Left colon (tissue), 2 donors: ENCODE measurements at regions of chr12 and their contacts with region 1.

Region 1: DNA sequence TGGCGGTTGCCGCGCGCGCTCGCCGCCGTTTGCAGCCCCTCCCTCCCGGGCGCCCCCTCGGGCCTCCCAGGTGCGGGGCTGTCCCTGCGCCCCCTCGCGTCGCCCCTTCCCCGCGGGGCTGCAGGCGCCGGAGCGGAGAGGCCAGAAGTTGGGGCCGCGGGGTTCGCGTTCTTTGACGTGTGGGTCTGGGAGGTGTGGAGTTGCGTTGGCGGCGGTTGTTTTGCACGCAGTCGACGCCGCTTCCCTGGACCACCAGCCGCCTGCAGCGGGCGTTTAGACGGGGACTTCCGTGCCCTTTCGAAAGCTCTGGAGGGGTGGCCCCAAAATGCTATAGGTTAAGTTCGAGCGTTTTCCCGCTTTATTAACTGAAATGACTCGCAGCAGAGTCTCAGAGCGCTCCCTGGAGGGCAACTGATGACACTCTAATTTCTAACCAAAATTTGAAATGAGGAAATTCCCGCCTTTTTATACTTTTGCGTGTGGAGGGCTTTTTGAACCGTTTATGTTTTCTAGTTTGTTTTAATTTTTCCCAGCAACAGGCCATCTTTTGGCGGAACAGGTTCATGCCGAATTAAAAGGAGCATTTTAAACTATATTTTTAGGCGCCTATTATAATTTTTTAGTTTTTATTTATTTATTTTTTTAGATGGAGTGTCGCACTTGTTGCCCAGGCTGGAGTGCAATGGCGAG is 939 bp downstream of the TMPO start:
- DNase-seq: peak; percentile 77 to 78
- ATAC-seq: peak; percentile 50

Region 2: GRCh38 chr12:98424726-98425401 is 91.5 kb before region 1 on chr12:
- intact Hi-C with region 1: loop called in 1 of 2 experiments (anchors 10 kb)
- DNase-seq: peak; percentile 58 to 73
- ATAC-seq: peak; percentile 76

Region 3: GRCh38 chr12:98490501-98491453 is 25.6 kb before region 1 on chr12:
- intact Hi-C with region 1: loop called in 1 of 2 experiments (anchors 2 kb)
- DNase-seq: peak; percentile 79 to 91
- ATAC-seq: peak; percentile 93

Region 4: DNA sequence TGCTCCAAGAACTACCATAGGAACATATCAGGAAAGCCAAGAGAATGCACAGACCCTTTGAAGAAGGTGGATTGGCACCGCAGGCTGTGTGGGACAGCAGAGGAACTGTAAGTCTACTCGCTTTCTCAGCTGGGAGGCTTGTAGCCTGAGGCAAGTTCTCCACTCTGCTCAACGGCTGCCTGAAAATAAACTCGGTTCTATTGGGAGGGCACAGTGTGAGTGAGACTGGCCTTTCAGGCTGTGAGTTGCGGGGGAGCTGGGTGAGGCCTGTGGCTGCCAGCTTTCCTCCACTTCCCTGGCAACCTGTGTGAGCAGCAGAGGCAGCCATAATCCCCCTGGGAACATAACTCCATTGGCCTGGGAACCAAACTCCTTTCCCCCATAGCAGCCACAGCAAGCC is 1336.3 kb after region 1 on chr12:
- intact Hi-C with region 1: no loop called
- DNase-seq: no peak
- ATAC-seq: no peak